Colonic mucosa (tissue), 4 donors: ENCODE measurements at regions of chr17 and their contacts with region 1.

Region 1: GRCh38 chr17:74954665-74955421 is 17.7 kb downstream of the HID1 start:
- DNase-seq: no peak
- H3K4me3 ChIP-seq: no peak overlapping the region
- H3K27ac ChIP-seq: no peak overlapping the region
- H3K4me1 ChIP-seq: no peaks in the 10 kb centered on the region
- H3K27me3 ChIP-seq: no peaks in the 10 kb centered on the region
- CTCF ChIP-seq: no peak

Region 2: GRCh38 chr17:74923533-74924249 is 31.2 kb before region 1 on chr17:
- intact Hi-C with region 1: loop called (anchors 2 kb)
- DNase-seq: peak; percentile 73
- H3K4me3 ChIP-seq: peak overlapping the region; percentile 20
- H3K27ac ChIP-seq: no peak overlapping the region
- H3K4me1 ChIP-seq: peaks cover 12% of the 10 kb centered on the region
- H3K27me3 ChIP-seq: peaks cover 70% of the 10 kb centered on the region
- CTCF ChIP-seq: peak; percentile 86

Region 3: DNA sequence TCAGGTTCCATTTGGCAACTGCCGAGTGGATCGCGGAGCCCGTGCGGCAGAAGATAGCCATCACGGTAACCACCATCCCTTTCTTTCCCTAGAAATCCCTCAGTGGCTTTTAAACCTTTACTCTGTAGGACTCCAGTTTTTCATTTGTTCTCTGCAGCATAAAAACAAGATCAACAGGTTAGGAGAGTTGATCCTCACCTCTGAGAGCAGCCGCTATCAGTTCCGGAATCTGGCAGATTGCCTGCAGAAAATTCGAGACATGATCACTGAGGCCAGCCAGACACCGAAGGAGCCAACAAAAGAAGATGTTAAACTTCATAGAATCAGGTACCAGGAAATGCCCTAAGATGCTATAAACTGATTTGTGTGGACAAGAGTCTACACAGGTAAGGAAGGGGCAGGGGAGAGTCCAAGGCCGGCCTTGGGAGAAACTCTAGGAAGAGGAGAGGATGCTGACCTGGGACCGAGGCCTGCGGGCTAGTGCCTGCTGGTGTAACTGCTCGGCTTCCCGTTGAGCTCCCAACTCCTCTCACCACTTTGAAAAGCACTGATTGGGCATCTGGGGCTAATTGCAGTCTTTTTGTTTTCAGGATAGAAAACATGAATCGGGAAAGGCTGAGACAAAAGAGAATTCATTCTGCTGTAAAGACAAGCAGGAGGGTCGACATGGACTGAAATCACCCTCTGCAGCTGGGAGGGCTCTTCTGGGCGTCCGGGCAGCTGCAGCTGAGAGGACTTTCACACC is 65.7 kb after region 1 on chr17:
- intact Hi-C with region 1: no loop called
- DNase-seq: no peak
- H3K4me3 ChIP-seq: no peak overlapping the region
- H3K27ac ChIP-seq: no peak overlapping the region
- H3K4me1 ChIP-seq: no peaks in the 10 kb centered on the region
- H3K27me3 ChIP-seq: no peaks in the 10 kb centered on the region
- CTCF ChIP-seq: no peak

Region 4: GRCh38 chr17:75033346-75034235 is 78.7 kb after region 1 on chr17:
- intact Hi-C with region 1: no loop called
- DNase-seq: peak; percentile 98
- H3K4me3 ChIP-seq: peak overlapping the region; percentile 58
- H3K27ac ChIP-seq: peak overlapping the region; percentile 72
- H3K4me1 ChIP-seq: peaks cover 3% of the 10 kb centered on the region
- H3K27me3 ChIP-seq: no peaks in the 10 kb centered on the region
- CTCF ChIP-seq: no peak

Region 5: DNA sequence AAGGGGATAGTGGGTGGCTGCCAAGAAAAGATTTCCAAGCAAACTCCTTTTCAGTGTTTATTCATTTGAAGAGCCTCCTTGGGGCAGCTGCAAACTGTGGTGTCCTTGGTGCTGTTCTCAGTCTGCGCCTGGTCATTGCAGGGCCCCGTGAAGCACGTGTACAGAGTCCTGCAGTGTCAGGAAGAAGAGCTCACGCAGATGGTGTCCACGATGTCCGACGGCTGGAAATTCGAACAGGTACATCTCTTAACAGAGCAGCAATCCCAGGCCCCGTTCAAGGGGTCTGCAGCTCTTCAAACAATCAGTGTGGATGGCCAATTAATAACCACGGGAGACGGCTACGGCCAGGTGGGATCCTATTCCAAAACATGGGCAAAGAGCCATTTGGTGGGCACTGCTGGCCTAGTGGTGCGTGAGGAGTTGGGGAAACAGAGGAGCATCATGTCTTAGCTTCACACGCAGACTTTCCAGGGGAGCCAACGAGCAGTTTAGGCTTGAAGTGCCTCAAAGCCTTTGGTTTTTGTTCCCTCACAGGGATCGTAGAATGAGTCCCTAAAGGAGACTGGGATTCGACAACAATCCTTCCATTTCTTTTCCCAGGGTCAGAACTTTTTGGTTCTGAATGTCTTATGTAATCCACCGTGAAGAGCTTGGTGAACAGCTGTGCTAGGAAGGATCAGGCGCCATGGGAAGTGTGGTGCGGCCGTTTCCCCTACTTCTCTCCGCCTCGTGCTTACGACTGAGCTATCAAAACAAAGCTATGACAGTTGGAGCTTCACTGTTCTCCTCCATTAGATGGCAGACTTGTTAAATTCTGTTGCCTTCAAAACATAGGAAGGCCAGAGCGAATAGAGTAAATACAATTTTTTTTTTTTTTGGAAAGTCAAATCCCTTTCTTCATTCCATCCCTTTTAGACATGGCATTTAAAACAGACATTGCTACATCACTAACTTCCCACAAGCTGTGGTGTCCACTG is 104.8 kb after region 1 on chr17:
- intact Hi-C with region 1: no loop called
- DNase-seq: no peak
- H3K4me3 ChIP-seq: no peak overlapping the region
- H3K27ac ChIP-seq: peak overlapping the region; percentile 19
- H3K4me1 ChIP-seq: no peaks in the 10 kb centered on the region
- H3K27me3 ChIP-seq: no peaks in the 10 kb centered on the region
- CTCF ChIP-seq: no peak